Pancreas (tissue), 10 donors: ENCODE measurements at regions of chr21 and their contacts with region 1.

Region 1: DNA sequence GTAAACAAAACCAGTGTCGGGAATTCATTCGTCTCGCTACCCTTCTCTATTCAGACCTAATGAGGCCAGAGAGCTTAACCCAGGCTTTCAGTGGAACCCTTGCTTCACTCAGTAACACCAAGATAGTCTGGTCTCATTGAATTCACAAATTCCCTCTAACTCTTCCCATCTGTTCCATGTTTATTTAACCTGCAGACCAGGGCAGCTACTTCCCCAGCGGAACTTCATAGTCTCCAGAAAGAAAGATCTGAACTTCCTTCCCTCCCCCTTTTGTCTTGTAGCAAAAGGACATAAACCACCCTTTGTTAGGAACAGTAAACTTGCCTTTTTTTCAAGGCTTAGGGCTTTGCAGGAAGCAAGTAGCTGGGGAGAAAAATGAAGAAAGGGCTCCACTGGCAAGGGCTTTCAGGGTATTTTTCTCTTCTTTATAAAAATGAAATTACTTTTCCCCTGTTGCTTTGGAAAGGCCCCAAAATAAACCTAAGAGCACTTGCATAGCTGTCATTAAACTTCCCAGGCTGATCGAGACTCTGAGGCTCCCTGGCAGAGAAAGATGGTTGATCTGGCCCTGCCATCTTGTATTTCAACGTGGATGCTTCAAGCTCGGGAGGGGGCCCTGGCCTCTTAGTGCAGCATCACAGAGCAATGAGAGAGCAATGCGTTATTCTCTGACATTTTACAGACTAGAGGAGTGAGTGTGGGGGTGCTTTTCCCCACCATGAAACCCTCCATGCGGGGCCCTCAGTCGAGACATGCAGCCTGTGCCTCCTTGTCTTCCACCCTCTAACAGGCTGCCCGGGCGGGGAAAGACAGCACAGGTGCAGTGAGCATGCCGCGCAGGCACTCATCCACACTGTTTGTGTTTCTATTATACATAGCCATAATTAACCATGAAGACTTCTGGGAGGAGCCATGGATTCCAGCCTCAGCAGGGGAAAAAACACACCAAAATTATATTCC is 30.0 kb downstream of the MIS18A start:
- DNase-seq: no peak
- ATAC-seq: peak in 2 of 4 donors; percentile 28 to 56
- H3K4me3 ChIP-seq: no peak overlapping the region
- H3K27ac ChIP-seq: no peak overlapping the region
- H3K4me1 ChIP-seq: no peaks in the 10 kb centered on the region
- H3K27me3 ChIP-seq: no peaks in the 10 kb centered on the region
- CTCF ChIP-seq: no peak

Region 2: DNA sequence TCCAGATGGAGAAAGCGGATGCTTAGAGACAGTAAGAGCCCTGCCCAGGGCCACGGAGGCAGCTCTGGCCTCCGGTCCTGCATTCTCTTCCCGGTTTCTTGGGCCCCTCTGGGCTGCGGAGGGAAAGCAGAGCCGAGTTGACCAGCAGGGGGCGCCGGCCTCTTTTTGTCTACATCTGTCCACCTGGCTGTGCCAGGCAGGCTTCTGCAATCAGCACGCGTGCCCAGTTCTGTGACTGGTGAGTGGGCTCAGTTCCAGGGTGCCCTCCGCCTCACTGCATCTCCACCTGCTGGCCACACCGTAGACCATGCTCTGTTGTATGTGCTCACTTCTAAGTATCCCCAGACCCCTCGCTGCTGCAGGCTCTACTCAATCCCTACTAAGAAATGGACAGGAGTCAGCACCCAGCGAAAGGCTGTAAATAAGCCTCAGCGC is 382.8 kb before region 1 on chr21:
- intact Hi-C with region 1: loop called in 2 of 3 experiments (anchors 5 to 10 kb)
- DNase-seq: peak; percentile 94 to 99 (median 98)
- ATAC-seq: peak; percentile 97 to 99 (median 98)
- H3K4me3 ChIP-seq: no peak overlapping the region
- H3K27ac ChIP-seq: no peak overlapping the region
- H3K4me1 ChIP-seq: peaks cover 0 to 5% (median 0%) of the 10 kb centered on the region in 3 donors
- H3K27me3 ChIP-seq: no peaks in the 10 kb centered on the region
- CTCF ChIP-seq: peak; percentile 96 to 99 (median 97)

Region 3: DNA sequence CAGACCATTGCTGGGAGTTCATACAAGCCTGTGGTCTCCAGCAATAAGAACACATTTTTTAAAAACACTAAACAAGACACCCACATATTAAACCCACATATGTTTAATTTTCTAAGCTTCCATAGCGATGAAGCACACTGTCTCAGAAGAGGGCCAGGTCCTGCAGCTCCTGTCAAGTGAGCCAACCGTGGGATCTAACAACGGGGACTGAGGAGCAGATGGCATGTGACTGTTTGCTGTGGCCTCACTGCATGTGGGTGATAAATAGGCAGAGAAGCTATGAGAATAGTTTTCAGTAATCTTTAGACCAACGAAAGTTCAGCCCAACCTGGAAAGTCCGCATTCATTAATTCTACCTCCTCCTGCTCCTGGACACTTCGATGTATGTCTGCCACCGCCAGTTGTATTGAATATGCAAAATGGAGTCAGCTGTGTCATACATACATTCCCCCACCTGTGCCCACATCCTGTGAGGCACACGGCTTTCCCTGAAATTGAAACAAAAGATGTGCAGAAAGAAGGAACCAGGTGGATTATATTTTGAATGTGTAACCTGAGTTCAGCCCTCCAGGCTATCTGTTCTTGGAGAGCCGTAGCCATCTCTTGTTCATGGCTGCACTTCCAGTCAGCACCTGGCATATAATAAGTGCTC is 58.2 kb before region 1 on chr21:
- intact Hi-C with region 1: no loop called
- DNase-seq: no peak
- ATAC-seq: no peak
- H3K4me3 ChIP-seq: no peak overlapping the region
- H3K27ac ChIP-seq: no peak overlapping the region
- H3K4me1 ChIP-seq: no peaks in the 10 kb centered on the region
- H3K27me3 ChIP-seq: no peaks in the 10 kb centered on the region
- CTCF ChIP-seq: no peak

Region 4: GRCh38 chr21:32306021-32306780 is 57.4 kb after region 1 on chr21:
- intact Hi-C with region 1: no loop called
- DNase-seq: no peak
- ATAC-seq: no peak
- H3K4me3 ChIP-seq: no peak overlapping the region
- H3K27ac ChIP-seq: no peak overlapping the region
- H3K4me1 ChIP-seq: no peaks in the 10 kb centered on the region
- H3K27me3 ChIP-seq: no peaks in the 10 kb centered on the region
- CTCF ChIP-seq: no peak